ENCODE measurements at regions of chr4 and their contacts with region 1.

Region 1: DNA sequence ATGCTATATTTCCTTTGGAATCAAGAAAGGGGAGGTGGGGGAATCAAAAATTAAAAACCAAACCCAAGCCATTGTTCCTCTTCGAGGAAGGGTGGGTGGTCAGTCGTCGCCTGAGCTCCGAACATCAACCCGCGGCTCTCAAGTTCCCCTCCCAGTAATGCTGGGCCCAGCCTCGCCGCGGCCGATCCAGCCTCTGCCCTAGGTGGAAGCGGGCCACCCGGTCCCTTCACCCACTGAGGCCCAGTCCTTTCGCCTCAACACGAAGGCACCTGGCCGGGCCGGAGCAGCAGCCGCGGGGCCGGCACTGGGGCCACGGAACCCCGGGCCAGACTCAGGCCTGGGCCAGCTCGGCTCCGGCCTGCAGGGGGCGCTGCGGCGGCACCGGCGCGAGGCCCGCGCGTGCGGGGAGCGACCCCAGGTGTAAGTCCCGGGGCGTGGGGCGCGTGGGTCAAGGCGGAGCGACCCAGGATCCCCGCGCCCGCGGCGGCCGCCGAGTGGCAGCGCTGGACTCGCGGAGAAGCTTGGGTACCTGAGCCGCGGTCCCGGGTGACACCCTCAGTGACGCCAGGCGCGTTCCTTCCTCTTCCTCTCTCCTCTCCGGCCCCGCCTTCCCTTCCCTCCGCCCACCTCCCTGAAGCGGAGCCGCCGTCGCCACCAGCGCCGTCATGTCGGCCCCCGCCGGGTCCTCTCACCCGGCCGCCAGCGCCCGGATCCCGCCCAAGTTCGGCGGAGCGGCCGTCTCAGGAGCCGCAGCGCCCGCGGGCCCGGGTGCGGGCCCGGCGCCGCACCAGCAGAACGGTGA is at the start of gene SEC24B:
- DNase-seq: peak; percentile 91 to 93
- ATAC-seq: peak; percentile 96 to 98 (median 96)
- H3K4me3 ChIP-seq: peak within 1 kb of the TSS; percentile 63 to 91 (median 85)
- H3K27ac ChIP-seq: peak within 1 kb of the TSS; percentile 89 to 98 (median 95)
- H3K4me1 ChIP-seq: peaks cover 5 to 51% (median 48%) of the 10 kb centered on the region in 9 donors
- H3K27me3 ChIP-seq: no peaks in the 10 kb centered on the region
- CTCF ChIP-seq: peak; percentile 73 to 98 (median 90)
- total RNA-seq, gene SEC24B: 22.4 to 34.1 (median 29.7) TPM

Region 2: GRCh38 chr4:109472343-109472761 is 38.9 kb after region 1 on chr4:
- intact Hi-C with region 1: loop called in 1 of 10 experiments (anchors 5 kb)
- DNase-seq: no peak
- ATAC-seq: peak in 2 of 8 donors; percentile 46 to 67
- H3K4me3 ChIP-seq: no peak overlapping the region
- H3K27ac ChIP-seq: no peak overlapping the region
- H3K4me1 ChIP-seq: peaks cover 0 to 67% (median 23%) of the 10 kb centered on the region in 9 donors
- H3K27me3 ChIP-seq: no peaks in the 10 kb centered on the region
- CTCF ChIP-seq: no peak

Region 3: GRCh38 chr4:109511414-109511813 is 78.0 kb after region 1 on chr4:
- intact Hi-C with region 1: loop called in 2 of 10 experiments (anchors 10 kb)
- DNase-seq: no peak
- ATAC-seq: no peak
- H3K4me3 ChIP-seq: no peak overlapping the region
- H3K27ac ChIP-seq: no peak overlapping the region
- H3K4me1 ChIP-seq: no peaks in the 10 kb centered on the region
- H3K27me3 ChIP-seq: no peaks in the 10 kb centered on the region
- CTCF ChIP-seq: no peak

Region 4: DNA sequence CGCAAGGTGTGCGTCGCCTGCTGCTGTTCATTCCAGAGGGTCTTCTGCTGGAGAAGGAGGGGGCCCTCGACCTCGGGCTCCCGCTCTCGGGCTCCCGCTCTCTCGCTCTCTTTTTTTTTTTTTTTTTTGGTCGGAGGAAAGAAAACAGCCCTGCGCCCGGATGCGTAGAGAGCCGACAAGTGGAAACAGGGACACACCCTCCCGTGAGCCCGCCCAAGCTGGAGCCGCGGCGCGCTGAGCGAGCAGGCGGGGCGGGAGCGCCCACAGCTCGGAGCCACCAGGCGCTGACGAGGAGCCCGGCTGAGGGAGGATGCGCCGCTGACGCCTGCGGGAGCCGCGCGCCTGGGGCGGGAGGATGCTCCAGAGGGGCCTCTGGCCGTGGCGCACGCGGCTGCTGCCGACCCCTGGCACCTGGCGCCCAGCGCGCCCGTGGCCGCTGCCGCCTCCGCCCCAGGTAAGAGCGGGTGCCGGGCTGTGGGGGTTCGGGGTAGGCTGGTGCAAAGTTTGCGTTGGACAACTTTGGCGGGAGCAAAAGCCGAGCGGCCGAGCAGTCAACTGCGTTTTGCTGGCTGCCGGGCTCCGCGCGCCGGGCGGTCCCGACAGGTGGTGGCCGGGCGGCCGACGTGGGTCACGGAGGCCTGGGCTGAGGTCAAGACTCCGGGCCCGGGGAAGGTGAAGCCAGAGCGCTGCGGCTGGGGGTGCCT is 126.7 kb after region 1 on chr4 and contains the start of gene MCUB:
- intact Hi-C with region 1: loop called in 6 of 10 experiments (anchors 5 to 10 kb)
- DNase-seq: peak; percentile 85 to 88
- ATAC-seq: peak; percentile 97 to 99 (median 98)
- H3K4me3 ChIP-seq: peak within 1 kb of the TSS; percentile 58 to 87 (median 74)
- H3K27ac ChIP-seq: peak within 1 kb of the TSS; percentile 69 to 94 (median 86)
- H3K4me1 ChIP-seq: peaks cover 0 to 24% (median 11%) of the 10 kb centered on the region in 9 donors
- H3K27me3 ChIP-seq: peaks cover 0 to 3% (median 0%) of the 10 kb centered on the region in 7 donors
- CTCF ChIP-seq: no peak
- total RNA-seq, gene MCUB: 1.7 to 12.6 (median 3.3) TPM

Region 5: DNA sequence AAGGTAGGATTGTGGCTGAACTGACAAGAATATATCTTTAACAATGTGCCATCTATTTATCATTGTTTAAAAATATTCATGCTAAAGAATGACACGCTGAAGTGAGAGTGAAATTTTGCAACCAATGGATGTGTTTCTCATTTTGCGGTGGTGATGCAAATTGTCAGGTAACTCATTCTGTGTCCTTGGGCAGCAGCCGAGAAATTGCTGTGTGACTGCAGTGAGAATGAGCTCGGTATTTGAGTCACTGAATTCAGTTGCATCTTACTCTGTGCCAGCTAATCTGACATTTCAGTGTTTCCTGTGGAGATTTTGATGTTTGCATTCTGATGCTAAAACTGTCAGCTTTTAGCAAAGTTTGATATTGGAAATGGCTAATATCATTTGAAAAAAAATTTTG is 154.8 kb after region 1 on chr4:
- intact Hi-C with region 1: no loop called
- DNase-seq: no peak
- ATAC-seq: no peak
- H3K4me3 ChIP-seq: no peak overlapping the region
- H3K27ac ChIP-seq: no peak overlapping the region
- H3K4me1 ChIP-seq: peaks cover 0 to 19% (median 8%) of the 10 kb centered on the region in 9 donors
- H3K27me3 ChIP-seq: no peaks in the 10 kb centered on the region
- CTCF ChIP-seq: no peak

Region 6: DNA sequence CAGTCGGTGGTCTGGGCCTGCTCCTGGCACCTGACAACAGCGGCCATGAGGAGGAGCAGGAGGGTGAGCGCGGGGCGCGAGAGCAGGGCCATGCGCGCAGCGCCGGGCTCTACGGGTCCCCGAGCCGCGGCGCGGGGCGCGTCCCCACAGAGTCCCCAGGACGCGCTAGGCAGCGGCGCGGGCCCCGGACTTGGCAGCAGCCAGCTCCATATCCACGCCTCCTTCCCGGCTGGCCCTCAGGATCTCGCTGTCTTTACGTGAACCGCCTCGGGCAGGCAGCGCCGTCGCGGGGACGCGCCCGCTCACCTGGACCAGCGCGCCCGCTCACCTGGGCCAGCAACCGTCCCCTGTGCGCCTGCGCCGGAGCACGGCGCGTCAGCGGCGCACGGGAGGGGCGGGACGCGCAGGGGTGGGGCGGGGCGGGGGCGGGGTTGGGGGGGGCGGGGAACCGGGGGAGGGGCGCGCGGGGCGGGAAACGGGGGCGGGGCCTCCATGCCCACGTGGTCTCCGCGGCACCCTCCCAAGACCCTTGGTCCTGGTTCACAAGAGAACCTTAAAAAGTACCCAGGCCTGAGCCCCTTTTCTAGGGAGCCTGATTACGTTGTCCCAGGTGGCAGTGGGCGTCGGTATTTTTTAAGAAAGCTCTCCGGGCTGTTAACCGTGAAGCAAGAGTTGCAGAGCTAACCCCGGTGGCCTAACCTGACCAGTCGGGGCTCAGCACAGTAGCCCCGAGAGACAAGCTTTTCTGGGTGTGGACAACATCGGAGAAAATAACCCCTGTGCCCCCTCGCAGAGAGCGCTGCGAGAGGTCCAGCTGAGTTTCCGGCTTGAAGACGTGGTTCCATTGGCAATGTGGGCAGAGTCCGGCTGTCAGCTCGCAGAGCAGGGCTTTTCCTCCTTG is 296.6 kb after region 1 on chr4 and contains the start of gene PLA2G12A:
- intact Hi-C with region 1: loop called in 2 of 10 experiments (anchors 10 kb)
- DNase-seq: peak; percentile 46 to 67
- ATAC-seq: peak; percentile 93 to 98 (median 96)
- H3K4me3 ChIP-seq: peak within 1 kb of the TSS; percentile 72 to 100 (median 92)
- H3K27ac ChIP-seq: peak within 1 kb of the TSS; percentile 28 to 92 (median 83)
- H3K4me1 ChIP-seq: peaks cover 0 to 24% (median 14%) of the 10 kb centered on the region in 9 donors
- H3K27me3 ChIP-seq: no peaks in the 10 kb centered on the region
- CTCF ChIP-seq: no peak
- total RNA-seq, gene PLA2G12A: 39.4 to 100 (median 50.3) TPM

Region 7: DNA sequence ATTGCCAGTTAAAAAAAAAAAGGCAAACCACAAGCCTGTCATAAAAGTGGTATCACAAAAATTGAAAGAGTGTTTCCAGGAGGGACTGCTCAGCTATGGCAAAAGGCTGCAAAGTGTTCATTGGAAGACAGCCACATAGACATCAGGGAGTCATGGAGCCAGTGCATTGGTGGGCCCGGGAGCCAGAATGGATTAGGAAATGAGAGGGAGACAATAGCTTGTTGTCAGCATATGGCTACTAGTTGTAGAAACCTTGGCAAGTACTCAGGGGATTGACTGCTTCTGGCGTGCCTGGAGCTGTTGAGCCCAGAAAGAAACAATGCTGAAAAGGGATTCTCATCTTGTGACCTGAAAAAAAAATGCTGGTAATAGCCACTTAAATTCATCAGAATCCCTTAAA is 387.2 kb after region 1 on chr4:
- intact Hi-C with region 1: loop called in 8 of 10 experiments (anchors 2 to 10 kb)
- DNase-seq: no peak
- ATAC-seq: no peak
- H3K4me3 ChIP-seq: no peak overlapping the region
- H3K27ac ChIP-seq: no peak overlapping the region
- H3K4me1 ChIP-seq: peaks cover 0 to 17% (median 12%) of the 10 kb centered on the region in 9 donors
- H3K27me3 ChIP-seq: no peaks in the 10 kb centered on the region
- CTCF ChIP-seq: no peak

Measured in heart right ventricle (tissue), 16 donors.